Spleen (tissue), 13 donors: ENCODE measurements at regions of chr2 and their contacts with region 1.

Region 1: DNA sequence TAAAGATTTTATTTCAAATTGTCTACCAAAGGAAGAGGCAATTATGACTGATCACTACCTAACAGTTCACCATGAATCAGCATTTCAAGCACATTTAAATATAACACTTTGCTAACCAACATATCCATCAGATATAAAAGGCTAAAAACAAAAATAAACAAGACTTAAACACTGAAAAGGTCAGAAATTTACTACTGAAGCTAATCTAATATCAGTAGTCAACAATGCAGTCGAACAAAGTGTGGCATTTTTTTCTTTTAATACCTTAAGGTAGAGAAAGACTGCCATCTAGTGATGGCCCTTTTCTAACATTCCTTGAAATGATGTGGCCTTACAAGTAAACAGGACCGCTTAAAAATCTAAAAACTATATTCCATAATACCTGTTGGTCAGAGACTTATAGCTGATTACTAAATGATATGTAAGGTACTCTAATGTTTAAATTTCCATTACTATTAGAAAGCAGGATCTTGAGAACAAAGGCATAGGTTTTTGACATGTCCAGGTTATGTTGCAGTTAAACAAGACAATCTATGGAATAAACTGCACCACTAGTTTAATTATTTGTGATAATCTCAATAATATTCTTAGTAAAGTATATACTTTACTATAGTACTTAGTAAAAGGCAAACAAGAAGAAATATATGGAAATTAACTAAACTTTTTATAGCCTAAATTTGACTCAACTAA is 80.0 kb downstream of the EXOC6B start:
- DNase-seq: no peak
- H3K4me3 ChIP-seq: no peak overlapping the region
- H3K27ac ChIP-seq: no peak overlapping the region
- H3K4me1 ChIP-seq: peaks cover 0 to 15% (median 6%) of the 10 kb centered on the region in 6 donors
- H3K27me3 ChIP-seq: no peaks in the 10 kb centered on the region
- CTCF ChIP-seq: peak in 9 of 11 experiments; percentile 16 to 63 (median 50)
- POLR2A ChIP-seq: no peak

Region 2: DNA sequence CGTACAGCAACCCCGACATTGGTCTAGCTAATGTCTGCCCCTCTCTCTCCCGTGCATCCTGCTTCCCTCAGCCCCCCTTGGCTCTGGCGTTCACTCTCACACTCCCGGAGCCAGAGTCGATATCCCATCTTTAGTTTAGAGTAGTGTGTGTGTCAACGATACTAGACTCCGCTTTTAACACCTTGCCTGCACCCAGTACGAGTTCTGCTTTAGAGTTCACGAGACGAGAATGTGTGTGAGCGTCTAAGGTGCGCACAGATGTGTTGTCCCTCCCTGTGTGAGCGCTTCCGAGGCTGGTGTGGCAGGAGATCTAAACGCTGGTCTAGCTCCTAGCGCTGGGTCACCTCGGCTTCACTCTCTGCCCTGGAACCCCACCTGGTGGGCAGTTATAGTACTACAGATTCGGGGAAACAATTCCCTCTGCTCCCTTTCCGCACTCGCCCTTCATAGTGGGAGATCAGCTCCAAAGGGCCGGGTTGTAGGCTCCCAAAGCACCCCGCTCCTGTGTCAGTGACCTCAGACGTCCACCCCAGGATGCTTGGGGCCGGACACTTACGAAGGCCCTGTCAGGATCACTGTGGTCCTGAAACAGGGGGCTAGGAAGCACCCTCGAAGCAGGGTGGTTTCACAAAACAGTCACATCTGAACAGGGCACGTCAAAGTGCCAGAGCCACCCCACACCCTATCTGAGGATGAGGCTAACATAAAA is 595.5 kb before region 1 on chr2:
- intact Hi-C with region 1: loop called (anchors 10 kb)
- DNase-seq: peak; percentile 87
- H3K4me3 ChIP-seq: peak overlapping the region in 7 of 8 donors; percentile 9 to 67 (median 42)
- H3K27ac ChIP-seq: no peak overlapping the region
- H3K4me1 ChIP-seq: peaks cover 28 to 51% (median 43%) of the 10 kb centered on the region in 6 donors
- H3K27me3 ChIP-seq: peaks cover 11 to 90% (median 50%) of the 10 kb centered on the region in 7 donors
- CTCF ChIP-seq: peak; percentile 63 to 88 (median 81)
- POLR2A ChIP-seq: no peak